ENCODE measurements at regions of chr20 and their contacts with region 1.

Region 1: GRCh38 chr20:14307956-14308355 is 29.5 kb downstream of the FLRT3 start:
- DNase-seq: no peak
- H3K4me3 Mint-ChIP-seq: no peak overlapping the region
- H3K27ac Mint-ChIP-seq: no peak overlapping the region
- H3K4me1 Mint-ChIP-seq: peaks cover 8% of the 10 kb centered on the region
- H3K27me3 Mint-ChIP-seq: no peaks in the 10 kb centered on the region
- CTCF ChIP-seq: no peak

Region 2: GRCh38 chr20:14259689-14260088 is 48.3 kb before region 1 on chr20:
- CTCF ChIA-PET with region 1: no interaction called
- intact Hi-C with region 1: loop called (anchors 10 kb)
- DNase-seq: no peak
- H3K4me3 Mint-ChIP-seq: no peak overlapping the region
- H3K27ac Mint-ChIP-seq: no peak overlapping the region
- H3K4me1 Mint-ChIP-seq: no peaks in the 10 kb centered on the region
- H3K27me3 Mint-ChIP-seq: no peaks in the 10 kb centered on the region
- CTCF ChIP-seq: no peak

Measured in Calu3 (cell line).